ENCODE measurements at regions of chr12 and their contacts with region 1.

Region 1: GRCh38 chr12:110742718-110743570 is at the start of gene PPP1CC:
- DNase-seq: peak; percentile 90
- H3K4me3 ChIP-seq: peak within 1 kb of the TSS; percentile 69 to 85 (median 79)
- H3K27ac ChIP-seq: peak within 1 kb of the TSS; percentile 71
- H3K4me1 ChIP-seq: peaks cover 35% of the 10 kb centered on the region
- H3K27me3 ChIP-seq: no peaks in the 10 kb centered on the region
- CTCF ChIP-seq: no peak
- total RNA-seq, gene PPP1CC: 91.0 to 116 TPM

Region 2: DNA sequence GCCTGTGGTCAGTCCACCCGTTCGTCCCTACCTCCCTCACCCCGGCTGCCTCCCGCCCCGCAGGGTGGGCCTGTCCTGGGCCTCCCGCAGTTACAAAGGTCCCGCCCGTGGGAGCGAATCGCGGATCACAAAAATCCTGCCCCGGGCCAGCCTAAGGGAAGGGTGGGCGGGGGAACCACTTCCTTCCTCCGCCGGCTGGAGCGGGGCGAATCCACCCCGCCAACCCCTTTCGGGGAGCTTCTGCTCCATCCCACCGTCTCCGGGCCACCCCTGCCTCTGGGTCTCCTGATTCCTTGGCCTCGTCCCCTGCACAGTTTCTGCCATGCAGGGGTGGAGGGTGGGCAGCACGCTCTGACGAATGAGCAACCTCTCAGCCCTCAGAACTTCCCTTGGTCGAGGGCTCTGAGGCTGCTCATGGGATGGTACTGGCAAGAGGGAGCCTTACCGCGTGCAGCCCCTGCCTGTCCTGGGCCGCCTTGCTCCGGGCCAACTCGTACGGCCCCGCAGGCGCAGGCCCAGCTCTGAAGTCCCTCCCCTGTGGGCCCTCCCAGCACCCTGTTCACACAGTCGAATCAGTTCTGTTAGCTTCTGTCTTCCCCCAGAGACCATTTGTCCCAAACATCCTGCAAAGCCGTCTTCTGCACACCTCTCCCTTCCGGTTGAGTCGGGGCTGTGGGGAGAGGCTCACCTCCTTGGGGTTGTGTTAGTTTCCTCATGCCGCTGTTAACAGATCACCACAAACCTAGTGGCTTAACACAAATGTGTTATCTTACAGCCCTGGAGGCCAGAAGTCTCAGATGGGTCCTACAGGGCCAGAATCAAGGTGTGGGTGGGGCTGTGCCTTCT is 53.4 kb before region 1 on chr12:
- CTCF ChIA-PET with region 1: no interaction called
- dilution Hi-C with region 1: no loop called
- in situ Hi-C with region 1: no loop called
- intact Hi-C with region 1: no loop called
- DNase-seq: no peak
- H3K4me3 ChIP-seq: peak overlapping the region in 1 of 3 experiments; percentile 14
- H3K27ac ChIP-seq: no peak overlapping the region
- H3K4me1 ChIP-seq: peaks cover 4% of the 10 kb centered on the region
- H3K27me3 ChIP-seq: peaks cover 25% of the 10 kb centered on the region
- CTCF ChIP-seq: no peak

Region 3: DNA sequence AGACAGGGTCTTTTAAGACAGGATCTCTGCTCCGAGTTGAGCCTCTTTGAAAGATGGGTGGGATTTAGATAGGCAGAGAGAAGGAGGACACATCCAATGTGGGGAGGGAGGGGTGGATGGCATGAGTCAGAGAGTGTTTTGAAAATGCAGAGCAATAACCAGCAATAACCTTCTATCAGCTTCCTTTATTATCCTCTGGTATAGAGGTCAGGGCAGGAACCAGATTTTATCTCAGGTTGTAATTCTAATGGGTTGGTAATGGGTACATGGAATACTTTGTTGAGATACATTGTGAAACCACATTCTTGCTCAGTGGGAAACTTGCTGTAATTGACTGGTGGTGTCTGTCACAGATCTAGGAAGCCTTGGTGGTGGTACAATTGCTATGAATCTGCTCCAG is 66.2 kb after region 1 on chr12:
- CTCF ChIA-PET with region 1: no interaction called
- dilution Hi-C with region 1: no loop called
- in situ Hi-C with region 1: no loop called
- intact Hi-C with region 1: loop called (anchors 5 kb)
- DNase-seq: peak; percentile 48
- H3K4me3 ChIP-seq: no peak overlapping the region
- H3K27ac ChIP-seq: no peak overlapping the region
- H3K4me1 ChIP-seq: peaks cover 13% of the 10 kb centered on the region
- H3K27me3 ChIP-seq: no peaks in the 10 kb centered on the region
- CTCF ChIP-seq: no peak

Measured in mammary epithelial cell (primary cell).